ENCODE measurements at regions of chr17 and their contacts with region 1.

Region 1: DNA sequence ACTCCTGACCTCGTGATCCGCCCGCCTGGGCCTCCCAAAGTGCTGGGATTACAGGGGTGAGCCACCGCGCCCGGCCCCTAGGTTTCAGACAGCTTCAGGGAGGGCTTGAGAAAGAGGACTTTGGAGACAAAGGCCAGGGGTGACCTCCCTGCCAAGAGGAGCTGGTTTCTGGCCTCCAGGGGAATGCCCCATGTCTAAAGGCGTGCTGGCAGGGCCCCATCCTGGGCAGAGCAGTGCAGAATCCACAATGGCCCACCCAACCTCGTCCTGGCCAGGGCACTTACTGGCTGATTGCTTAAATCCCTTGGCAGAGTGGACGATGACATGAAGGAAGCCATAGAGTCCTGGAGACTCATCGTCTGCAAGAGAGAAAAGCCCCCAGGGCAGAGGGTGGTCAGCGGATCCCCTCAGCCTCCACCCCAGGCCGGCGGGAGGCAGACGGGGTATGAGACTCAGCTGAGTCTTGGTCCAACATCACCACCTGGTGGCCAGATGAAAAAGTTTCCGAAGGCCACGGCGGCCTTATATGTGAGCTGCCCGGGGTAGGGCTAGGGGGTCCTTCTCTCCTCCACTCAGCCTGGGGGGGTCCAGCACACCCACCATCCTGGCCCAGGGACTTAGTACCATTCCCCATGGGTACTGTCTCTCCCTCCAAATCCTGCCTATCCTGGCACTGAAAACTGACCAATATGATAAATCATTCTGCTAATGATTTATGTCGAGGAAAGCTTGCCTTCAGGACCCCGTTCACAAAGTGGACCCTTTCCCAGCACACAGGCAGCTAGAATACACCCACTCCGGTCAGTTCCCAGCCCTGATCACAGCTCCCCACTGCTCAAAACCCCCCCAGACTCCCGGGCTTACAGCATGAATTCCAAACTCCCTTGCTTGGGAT is 59.1 kb downstream of the TIMM22 start:
- DNase-seq: peak; percentile 64 to 88
- ATAC-seq: peak; percentile 68 to 89
- H3K4me3 ChIP-seq: no peak overlapping the region
- H3K27ac ChIP-seq: no peak overlapping the region
- H3K4me1 ChIP-seq: peaks cover 5% of the 10 kb centered on the region
- CTCF ChIP-seq: peak; percentile 64
- EP300 ChIP-seq: no peak
- POLR2A ChIP-seq: no peak
- RAD21 ChIP-seq: peak; percentile 63 to 67

Region 2: DNA sequence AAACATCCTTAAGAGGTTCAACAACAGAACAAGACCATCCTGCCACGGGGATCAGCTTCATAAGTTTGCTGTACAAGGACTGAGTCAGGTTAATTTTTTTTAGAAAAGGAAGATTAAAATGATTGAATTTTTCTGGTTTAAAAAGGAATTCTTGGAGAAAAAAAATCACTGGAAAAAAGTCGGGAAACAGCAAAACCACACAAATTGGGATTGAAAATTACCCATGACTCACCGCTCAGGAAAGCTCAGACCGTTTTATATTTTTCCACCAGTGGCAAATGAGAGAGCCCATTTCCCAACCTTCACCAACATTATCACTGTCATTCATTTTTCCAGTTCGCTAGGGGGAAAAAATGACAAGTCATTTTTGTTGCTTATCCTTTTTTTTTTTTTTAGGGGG is 227.2 kb before region 1 on chr17:
- CTCF ChIA-PET with region 1: no interaction called
- POLR2A ChIA-PET with region 1: no interaction called
- DNase-seq: no peak
- ATAC-seq: no peak
- H3K4me3 ChIP-seq: no peak overlapping the region
- H3K27ac ChIP-seq: no peak overlapping the region
- H3K4me1 ChIP-seq: no peaks in the 10 kb centered on the region
- CTCF ChIP-seq: no peak
- EP300 ChIP-seq: no peak
- POLR2A ChIP-seq: no peak
- RAD21 ChIP-seq: no peak

Region 3: DNA sequence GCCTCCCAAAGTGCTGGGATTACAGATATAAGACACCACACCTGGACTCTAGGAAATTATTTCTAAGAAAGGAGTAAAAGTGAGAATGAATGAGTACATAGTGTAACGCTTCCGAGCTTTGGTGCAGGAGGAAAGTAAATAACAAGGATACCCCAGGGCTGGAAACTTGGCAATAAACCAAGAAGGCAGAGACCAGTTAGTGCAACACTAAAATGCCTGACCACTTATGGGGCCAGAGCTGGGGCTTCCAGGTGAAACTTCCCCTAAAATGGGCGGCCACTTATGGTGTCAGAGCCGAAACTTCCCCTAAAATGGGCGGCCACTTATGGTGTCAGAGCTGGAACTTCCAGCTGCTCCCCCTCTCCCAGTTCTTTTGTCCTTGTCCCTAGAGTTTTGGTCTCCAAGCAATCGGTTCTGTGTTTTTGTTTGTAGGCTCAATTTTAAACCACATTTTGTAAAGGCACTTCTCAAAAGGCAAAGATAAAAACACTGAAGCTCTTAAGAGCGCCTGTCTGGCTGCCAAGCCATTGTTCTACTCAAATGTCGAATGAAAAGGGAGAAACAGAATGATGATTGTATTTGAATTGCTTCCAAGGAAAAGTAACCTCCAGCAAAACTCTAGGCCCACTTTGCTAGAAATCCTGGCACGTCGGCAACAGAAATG is 140.3 kb before region 1 on chr17:
- CTCF ChIA-PET with region 1: no interaction called
- POLR2A ChIA-PET with region 1: no interaction called
- DNase-seq: no peak
- ATAC-seq: no peak
- H3K4me3 ChIP-seq: no peak overlapping the region
- H3K27ac ChIP-seq: no peak overlapping the region
- H3K4me1 ChIP-seq: no peaks in the 10 kb centered on the region
- CTCF ChIP-seq: no peak
- EP300 ChIP-seq: no peak
- POLR2A ChIP-seq: no peak
- RAD21 ChIP-seq: no peak

Region 4: GRCh38 chr17:964876-965275 is 91.1 kb before region 1 on chr17:
- CTCF ChIA-PET with region 1: no interaction called
- POLR2A ChIA-PET with region 1: no interaction called
- DNase-seq: no peak
- ATAC-seq: peak in 1 of 2 experiments; percentile 31; a peak in 2 of 6 replicates
- H3K4me3 ChIP-seq: no peak overlapping the region
- H3K27ac ChIP-seq: no peak overlapping the region
- H3K4me1 ChIP-seq: no peaks in the 10 kb centered on the region
- CTCF ChIP-seq: no peak
- EP300 ChIP-seq: no peak
- POLR2A ChIP-seq: no peak
- RAD21 ChIP-seq: no peak

Region 5: GRCh38 chr17:1008008-1008815 is 47.8 kb before region 1 on chr17:
- CTCF ChIA-PET with region 1: interaction called, 16 read pairs
- POLR2A ChIA-PET with region 1: no interaction called
- DNase-seq: no peak
- ATAC-seq: no peak
- H3K4me3 ChIP-seq: no peak overlapping the region
- H3K27ac ChIP-seq: no peak overlapping the region
- H3K4me1 ChIP-seq: no peaks in the 10 kb centered on the region
- CTCF ChIP-seq: no peak
- EP300 ChIP-seq: no peak
- POLR2A ChIP-seq: no peak
- RAD21 ChIP-seq: no peak

Region 6: GRCh38 chr17:1039511-1040215 is 16.3 kb before region 1 on chr17:
- CTCF ChIA-PET with region 1: interaction called, 102 read pairs
- POLR2A ChIA-PET with region 1: no interaction called
- DNase-seq: no peak
- ATAC-seq: no peak
- H3K4me3 ChIP-seq: no peak overlapping the region
- H3K27ac ChIP-seq: no peak overlapping the region
- H3K4me1 ChIP-seq: no peaks in the 10 kb centered on the region
- CTCF ChIP-seq: no peak
- EP300 ChIP-seq: no peak
- POLR2A ChIP-seq: no peak
- RAD21 ChIP-seq: no peak

Region 7: DNA sequence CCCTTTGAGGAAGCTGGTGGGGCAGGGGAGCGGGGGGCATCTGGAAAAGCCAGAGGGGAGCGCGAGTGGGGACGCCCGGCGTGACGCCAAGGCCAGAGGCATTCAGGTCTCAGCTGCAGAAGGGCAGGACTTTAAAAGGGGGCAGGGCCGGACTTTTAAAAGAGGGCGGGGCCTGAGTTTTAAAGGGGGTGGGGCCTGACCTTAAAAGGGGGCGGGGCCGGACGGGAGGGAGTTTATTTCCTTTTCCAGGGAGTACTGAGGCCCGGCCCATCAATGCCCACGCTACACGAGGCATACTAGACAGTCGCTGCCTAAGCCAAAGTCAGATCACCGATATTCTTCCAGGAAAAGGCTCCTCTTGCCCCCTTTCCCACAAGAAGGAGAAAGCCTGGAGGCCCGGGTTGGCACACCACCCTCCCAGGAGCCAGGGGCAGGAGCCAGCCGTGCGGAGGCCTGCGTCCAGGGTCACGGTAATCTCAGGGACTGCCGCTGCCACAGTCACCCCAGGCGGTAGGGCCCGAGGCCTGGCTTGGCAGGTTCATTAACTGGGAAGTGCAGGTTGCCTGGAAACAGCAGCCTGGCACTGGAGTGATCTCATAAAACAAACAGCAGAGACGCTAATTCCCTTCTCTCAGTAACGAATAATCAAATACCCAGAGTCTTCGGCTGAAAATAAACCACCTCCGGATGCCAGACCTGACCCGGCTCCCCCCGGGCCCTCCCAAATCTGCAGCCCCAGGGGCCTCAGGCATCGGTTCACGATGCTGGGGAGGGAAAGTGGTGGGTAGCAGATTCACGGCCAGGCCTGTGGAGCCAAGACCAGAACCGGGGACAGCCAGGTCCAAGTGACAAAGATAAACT is 31.6 kb after region 1 on chr17:
- CTCF ChIA-PET with region 1: interaction called, 23 read pairs
- POLR2A ChIA-PET with region 1: no interaction called
- DNase-seq: peak; percentile 64 to 84
- ATAC-seq: peak; percentile 81 to 85
- H3K4me3 ChIP-seq: peak overlapping the region; percentile 25; the same call in 2 of the 3 replicates
- H3K27ac ChIP-seq: peak overlapping the region; percentile 81 to 89
- H3K4me1 ChIP-seq: peaks cover 27% of the 10 kb centered on the region
- CTCF ChIP-seq: no peak
- EP300 ChIP-seq: no peak
- POLR2A ChIP-seq: no peak; the same call in 1 of the 2 replicates
- RAD21 ChIP-seq: no peak

Region 8: DNA sequence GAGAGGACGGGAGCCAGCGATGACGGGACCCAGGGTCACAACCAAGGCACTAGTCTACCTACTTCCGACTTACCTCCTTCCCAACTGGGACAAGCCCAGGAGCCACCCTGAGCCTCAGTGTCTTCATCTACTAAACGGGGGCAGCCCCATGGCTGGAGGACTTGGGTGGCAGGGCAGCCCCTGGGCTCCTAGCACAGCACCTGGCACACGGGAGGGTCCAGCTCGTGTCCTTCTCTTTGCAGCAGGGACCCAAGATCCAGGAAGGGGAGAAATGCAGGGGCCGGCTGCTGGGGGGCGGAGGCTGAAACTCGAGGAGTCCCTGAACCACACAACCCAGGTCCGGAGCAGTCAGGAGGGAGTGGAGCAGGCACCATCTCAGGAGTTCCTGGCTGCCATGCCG is 60.6 kb after region 1 on chr17:
- CTCF ChIA-PET with region 1: interaction called, 77 read pairs
- POLR2A ChIA-PET with region 1: no interaction called
- DNase-seq: no peak
- ATAC-seq: no peak
- H3K4me3 ChIP-seq: no peak overlapping the region
- H3K27ac ChIP-seq: peak overlapping the region; percentile 27 to 99; a peak in 4 of 6 replicates
- H3K4me1 ChIP-seq: peaks cover 34% of the 10 kb centered on the region
- CTCF ChIP-seq: no peak
- EP300 ChIP-seq: no peak
- POLR2A ChIP-seq: no peak
- RAD21 ChIP-seq: no peak

Region 9: DNA sequence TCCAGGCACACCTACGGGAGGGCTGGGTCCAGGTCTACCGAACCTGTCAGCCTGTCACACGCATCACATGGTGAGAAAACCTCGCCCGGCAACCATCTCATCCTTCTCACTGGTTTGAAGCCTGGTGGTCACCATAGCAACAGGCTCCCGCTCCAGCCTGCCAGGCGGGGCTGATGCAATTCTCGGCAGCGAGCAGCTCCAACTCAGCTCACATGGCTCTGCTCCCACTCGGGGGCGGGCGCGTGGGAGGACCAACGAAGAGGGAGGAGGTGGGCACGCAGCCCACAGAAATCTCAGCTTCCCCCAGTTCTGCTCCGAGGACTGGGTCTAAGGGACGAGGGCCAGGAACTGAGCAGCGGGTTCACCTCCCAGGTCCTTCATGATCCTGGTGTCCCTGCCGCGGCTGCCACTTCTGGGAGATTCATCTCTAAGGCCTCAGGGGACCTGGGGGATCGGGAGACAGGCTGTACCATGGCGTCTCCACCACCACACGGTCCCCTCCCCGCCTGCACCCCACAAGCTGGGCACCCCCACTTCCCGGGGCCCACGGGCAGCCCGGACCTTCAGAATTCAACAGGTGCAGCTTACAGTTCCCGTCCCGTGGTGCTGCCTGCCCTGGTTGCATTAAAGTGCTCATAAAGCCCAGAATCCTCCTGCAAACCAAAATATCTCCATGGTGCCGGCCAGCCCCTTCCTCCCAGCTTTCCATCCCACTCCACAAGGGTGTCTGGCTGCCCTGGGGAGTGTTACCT is 98.0 kb after region 1 on chr17:
- CTCF ChIA-PET with region 1: interaction called, 177 read pairs
- POLR2A ChIA-PET with region 1: no interaction called
- DNase-seq: peak; percentile 51 to 55
- ATAC-seq: peak; percentile 66 to 67
- H3K4me3 ChIP-seq: no peak overlapping the region
- H3K27ac ChIP-seq: peak overlapping the region in 1 of 2 experiments; percentile 71; a peak in 3 of 6 replicates
- H3K4me1 ChIP-seq: no peaks in the 10 kb centered on the region
- CTCF ChIP-seq: no peak
- EP300 ChIP-seq: no peak
- POLR2A ChIP-seq: no peak
- RAD21 ChIP-seq: no peak

Region 10: GRCh38 chr17:1186923-1187771 is 131.1 kb after region 1 on chr17:
- CTCF ChIA-PET with region 1: interaction called, 43 read pairs
- POLR2A ChIA-PET with region 1: no interaction called
- DNase-seq: peak; percentile 92 to 95
- ATAC-seq: peak; percentile 90 to 98
- H3K4me3 ChIP-seq: no peak overlapping the region
- H3K27ac ChIP-seq: peak overlapping the region in 1 of 2 experiments; percentile 61; a peak in 3 of 6 replicates
- H3K4me1 ChIP-seq: peaks cover 4% of the 10 kb centered on the region; the same call in 1 of the 3 replicates
- CTCF ChIP-seq: peak; percentile 97
- EP300 ChIP-seq: no peak
- POLR2A ChIP-seq: no peak
- RAD21 ChIP-seq: peak; percentile 79 to 85